Caco-2 (cell line): ENCODE measurements at regions of chr1 and their contacts with region 1.

Region 1: DNA sequence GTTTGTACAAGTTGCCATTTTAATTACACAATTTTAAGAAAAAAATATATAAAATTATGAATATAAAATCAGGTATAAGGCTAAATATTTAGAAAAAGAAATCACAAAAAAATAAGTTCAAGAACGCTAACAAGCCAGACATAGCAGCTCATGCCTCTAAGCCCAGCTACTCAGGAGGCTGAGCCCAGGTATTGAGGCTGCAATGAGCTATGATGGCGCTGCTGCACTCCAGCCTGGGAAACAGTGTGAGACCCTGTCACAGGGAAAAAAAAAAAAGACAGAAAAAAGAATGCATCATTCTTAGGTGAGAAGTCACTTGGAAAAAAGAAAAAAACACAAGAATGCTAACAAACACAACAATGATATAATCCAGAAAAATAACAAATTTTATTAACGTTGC is 112.3 kb upstream of the PRDX6 start:
- DNase-seq: no peak
- H3K4me3 ChIP-seq: no peak overlapping the region
- H3K4me3 Mint-ChIP-seq: no peak overlapping the region
- H3K27ac Mint-ChIP-seq: no peak overlapping the region
- H3K4me1 ChIP-seq: no peaks in the 10 kb centered on the region
- H3K4me1 Mint-ChIP-seq: no peaks in the 10 kb centered on the region
- H3K27me3 ChIP-seq: no peaks in the 10 kb centered on the region
- H3K27me3 Mint-ChIP-seq: no peaks in the 10 kb centered on the region
- CTCF ChIP-seq: no peak

Region 2: DNA sequence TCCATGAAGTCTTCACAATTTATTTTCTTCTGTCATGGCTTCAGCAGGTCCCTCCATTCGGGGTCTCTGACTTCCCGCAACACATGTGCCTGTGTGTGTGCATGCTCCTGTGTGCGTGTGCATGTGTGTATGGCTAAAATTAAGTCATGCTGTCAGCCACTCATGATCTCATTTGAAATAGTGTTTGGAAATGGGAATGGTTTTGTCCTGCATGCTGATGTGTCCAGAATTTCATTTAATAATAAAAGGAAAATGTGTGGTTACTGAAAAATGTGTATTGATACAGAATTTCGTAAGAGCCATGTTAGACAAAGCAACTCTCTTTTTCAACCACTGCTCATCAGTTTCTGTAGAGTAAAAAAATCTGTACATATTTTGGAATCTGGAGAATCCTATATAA is 11.5 kb before region 1 on chr1:
- CTCF ChIA-PET with region 1: no interaction called
- POLR2A ChIA-PET with region 1: no interaction called
- intact Hi-C with region 1: loop called (anchors 1 kb)
- DNase-seq: no peak
- H3K4me3 ChIP-seq: no peak overlapping the region
- H3K4me3 Mint-ChIP-seq: no peak overlapping the region
- H3K27ac Mint-ChIP-seq: no peak overlapping the region
- H3K4me1 ChIP-seq: no peaks in the 10 kb centered on the region
- H3K4me1 Mint-ChIP-seq: no peaks in the 10 kb centered on the region
- H3K27me3 ChIP-seq: no peaks in the 10 kb centered on the region
- H3K27me3 Mint-ChIP-seq: no peaks in the 10 kb centered on the region
- CTCF ChIP-seq: no peak